ENCODE measurements at regions of chr20 and their contacts with region 1.

Region 1: DNA sequence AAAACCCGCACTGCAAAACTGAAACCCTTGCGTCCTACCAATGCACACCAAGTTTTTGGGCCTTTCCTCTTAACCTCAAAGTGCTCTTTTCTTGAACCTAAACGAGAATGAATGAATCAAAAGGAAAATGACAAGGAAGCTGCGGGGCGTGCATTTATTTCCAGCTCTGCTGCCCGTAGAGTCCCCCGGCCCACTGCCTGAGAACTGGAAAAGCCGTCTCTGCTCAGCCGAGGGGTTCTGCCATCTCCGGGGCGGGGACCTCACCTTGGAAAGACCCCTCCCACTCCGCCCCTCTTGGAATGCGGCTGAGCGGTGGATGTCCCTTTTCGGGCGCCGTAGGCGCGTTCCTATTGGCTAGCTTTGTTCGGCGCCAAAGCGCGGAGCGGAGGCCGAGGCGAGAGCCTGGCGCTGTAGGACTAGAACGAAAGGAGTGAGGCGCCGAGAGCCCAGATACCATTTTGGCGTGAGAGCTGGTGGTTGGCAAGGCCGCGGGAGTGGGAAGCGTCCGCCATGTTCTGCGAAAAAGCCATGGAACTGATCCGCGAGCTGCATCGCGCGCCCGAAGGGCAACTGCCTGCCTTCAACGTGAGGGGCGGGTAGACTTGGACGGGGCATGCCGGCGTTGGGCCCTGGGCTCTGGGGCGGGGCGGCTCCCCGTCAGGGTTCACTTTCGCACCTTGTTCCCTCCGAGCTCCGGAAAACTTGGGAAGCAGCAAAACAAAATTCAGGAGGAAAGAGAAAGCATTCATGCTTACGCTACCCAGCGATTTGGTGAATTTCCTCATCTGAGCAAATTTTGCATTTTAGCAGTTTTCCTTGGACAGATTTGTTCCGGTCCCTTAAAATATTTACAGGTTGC is at the start of gene GINS1:
- DNase-seq: peak; percentile 83 to 86
- ATAC-seq: peak; percentile 97
- total RNA-seq, gene GINS1: 2.7 to 5.0 TPM

Region 2: DNA sequence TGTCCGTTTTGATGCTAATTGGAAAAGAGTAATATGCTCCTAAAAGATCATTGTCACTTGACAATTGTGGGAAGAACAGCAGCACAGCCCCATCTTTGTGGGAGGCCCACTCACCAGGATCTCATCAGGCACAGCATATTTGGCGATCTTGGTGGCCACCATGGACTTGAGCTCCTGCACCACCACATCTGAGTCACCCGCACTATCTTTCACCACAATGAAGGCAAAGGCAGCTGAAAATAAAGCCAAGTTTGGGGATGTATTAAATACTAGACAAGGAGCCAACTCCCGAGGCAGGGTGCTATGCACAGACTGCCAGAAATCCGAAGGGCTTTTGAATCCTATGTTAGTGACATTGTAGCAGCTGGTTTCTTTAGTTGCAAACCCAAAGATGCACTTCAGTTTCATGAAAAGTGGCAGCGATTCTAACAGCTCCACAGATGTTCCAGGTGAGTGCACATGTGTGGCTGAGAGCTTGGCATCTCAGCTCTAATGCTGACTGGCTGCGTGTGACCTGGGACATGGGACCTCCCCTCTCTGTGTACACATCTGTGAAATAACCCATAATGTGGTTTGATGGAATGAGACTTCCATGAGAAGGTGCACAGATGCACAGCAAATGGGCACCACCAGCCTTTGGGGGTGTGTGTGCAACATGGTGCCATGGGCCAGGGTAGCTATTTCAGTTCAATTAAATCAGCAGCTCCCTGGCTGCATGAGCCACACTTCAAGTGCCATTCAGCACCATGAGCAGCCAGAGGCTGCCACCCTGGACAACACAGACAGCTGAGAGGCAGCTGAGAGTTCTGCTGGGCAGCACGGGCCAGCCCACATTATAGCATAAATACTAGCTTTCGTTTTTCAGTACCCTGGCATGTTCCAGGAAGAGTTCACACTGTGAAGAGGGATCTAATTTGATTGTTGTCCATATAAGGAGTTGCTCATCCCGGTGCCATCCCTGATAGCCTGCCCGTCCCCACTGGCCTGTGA is 398.1 kb before region 1 on chr20:
- intact Hi-C with region 1: no loop called
- DNase-seq: peak in 1 of 2 donors; percentile 24
- ATAC-seq: no peak

Region 3: GRCh38 chr20:25223179-25223661 is 184.3 kb before region 1 on chr20:
- intact Hi-C with region 1: no loop called
- DNase-seq: peak in 1 of 2 donors; percentile 83
- ATAC-seq: peak; percentile 74

Region 4: DNA sequence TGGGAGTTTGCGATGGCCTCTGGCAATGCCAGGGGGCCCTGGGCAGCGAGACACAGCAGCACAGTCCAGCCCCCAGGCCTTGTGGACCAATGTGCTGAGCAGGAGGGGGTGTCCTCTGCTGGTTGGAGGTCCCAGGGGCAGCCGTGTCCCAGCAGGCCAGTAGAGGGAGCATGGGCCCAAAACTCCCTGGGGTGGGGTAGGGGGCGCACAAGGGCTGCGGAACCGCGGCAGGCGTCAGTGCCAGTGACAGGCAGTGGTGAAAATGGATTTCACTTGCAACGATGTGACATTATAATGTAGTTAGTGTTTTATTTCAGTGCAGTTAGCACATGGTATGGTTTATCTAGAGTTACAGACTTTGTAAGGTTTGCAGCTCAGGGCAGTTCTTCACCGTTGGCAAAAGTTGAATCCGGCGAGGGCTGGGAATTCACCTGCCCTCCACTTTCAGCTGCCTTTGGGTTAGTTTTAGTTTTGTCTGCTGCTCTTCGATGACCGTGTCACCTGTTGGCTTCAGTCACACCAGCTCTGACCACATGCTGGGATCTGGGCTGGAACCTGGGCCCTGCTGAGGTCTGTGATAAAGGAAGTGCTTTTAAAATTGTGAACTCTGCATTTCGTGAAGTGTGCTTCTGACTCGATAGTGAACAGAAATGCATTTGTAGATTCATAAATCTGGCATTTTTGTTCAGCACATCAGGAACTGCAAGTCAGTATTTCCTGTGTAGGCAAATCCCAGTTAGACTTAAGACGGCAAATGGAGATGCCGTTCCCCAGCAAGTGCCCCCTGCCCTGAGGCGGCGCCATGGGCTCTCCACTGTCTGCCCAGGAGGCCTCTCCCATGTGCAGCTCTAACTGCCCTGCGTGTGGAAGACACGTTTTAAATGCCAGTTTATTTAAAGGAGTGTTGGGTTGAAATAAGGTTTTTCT is 112.8 kb before region 1 on chr20:
- intact Hi-C with region 1: loop called in 1 of 2 experiments (anchors 10 kb)
- DNase-seq: peak in 1 of 2 donors; percentile 62
- ATAC-seq: peak; percentile 21

Measured in left colon (tissue), 2 donors.